ENCODE measurements at regions of chr6 and their contacts with region 1.

Region 1: GRCh38 chr6:41092421-41093140 is 19.8 kb downstream of the NFYA start:
- DNase-seq: no peak
- H3K4me3 ChIP-seq: no peak overlapping the region
- H3K4me3 Mint-ChIP-seq: no peak overlapping the region
- H3K27ac Mint-ChIP-seq: no peak overlapping the region
- H3K4me1 ChIP-seq: no peaks in the 10 kb centered on the region
- H3K4me1 Mint-ChIP-seq: no peaks in the 10 kb centered on the region
- H3K27me3 ChIP-seq: no peaks in the 10 kb centered on the region
- H3K27me3 Mint-ChIP-seq: no peaks in the 10 kb centered on the region
- CTCF ChIP-seq: peak; percentile 32 to 37

Region 2: GRCh38 chr6:41051873-41052272 is 40.7 kb before region 1 on chr6:
- CTCF ChIA-PET with region 1: no interaction called
- POLR2A ChIA-PET with region 1: no interaction called
- intact Hi-C with region 1: no loop called
- DNase-seq: no peak
- H3K4me3 ChIP-seq: no peak overlapping the region
- H3K4me3 Mint-ChIP-seq: peak overlapping the region; percentile 2
- H3K27ac Mint-ChIP-seq: peak overlapping the region; percentile 64
- H3K4me1 ChIP-seq: peaks cover 99% of the 10 kb centered on the region
- H3K4me1 Mint-ChIP-seq: peaks cover 76% of the 10 kb centered on the region
- H3K27me3 ChIP-seq: no peaks in the 10 kb centered on the region
- H3K27me3 Mint-ChIP-seq: no peaks in the 10 kb centered on the region
- CTCF ChIP-seq: no peak

Region 3: DNA sequence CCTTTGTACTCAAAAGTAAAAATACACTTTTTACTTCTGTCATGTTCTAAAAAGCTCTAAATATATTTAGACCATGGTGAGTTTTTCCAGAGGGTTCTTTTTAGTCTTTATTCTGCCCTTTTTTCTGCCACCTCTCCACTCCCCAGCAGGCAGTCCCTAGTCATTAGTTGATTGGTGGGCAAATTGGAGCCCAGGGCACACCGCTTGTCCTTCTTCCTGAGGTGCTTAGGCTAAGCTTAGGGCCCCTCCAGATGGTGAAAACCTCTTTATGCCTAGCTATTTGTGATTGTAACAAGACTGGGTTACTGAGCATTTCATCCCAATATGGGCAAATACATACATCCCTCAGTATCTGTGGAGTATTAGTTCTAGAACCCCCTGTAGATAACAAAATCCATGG is 55.3 kb after region 1 on chr6:
- CTCF ChIA-PET with region 1: no interaction called
- POLR2A ChIA-PET with region 1: no interaction called
- intact Hi-C with region 1: loop called (anchors 2 kb)
- DNase-seq: no peak
- H3K4me3 ChIP-seq: no peak overlapping the region
- H3K4me3 Mint-ChIP-seq: no peak overlapping the region
- H3K27ac Mint-ChIP-seq: no peak overlapping the region
- H3K4me1 ChIP-seq: no peaks in the 10 kb centered on the region
- H3K4me1 Mint-ChIP-seq: no peaks in the 10 kb centered on the region
- H3K27me3 ChIP-seq: no peaks in the 10 kb centered on the region
- H3K27me3 Mint-ChIP-seq: no peaks in the 10 kb centered on the region
- CTCF ChIP-seq: no peak

Region 4: DNA sequence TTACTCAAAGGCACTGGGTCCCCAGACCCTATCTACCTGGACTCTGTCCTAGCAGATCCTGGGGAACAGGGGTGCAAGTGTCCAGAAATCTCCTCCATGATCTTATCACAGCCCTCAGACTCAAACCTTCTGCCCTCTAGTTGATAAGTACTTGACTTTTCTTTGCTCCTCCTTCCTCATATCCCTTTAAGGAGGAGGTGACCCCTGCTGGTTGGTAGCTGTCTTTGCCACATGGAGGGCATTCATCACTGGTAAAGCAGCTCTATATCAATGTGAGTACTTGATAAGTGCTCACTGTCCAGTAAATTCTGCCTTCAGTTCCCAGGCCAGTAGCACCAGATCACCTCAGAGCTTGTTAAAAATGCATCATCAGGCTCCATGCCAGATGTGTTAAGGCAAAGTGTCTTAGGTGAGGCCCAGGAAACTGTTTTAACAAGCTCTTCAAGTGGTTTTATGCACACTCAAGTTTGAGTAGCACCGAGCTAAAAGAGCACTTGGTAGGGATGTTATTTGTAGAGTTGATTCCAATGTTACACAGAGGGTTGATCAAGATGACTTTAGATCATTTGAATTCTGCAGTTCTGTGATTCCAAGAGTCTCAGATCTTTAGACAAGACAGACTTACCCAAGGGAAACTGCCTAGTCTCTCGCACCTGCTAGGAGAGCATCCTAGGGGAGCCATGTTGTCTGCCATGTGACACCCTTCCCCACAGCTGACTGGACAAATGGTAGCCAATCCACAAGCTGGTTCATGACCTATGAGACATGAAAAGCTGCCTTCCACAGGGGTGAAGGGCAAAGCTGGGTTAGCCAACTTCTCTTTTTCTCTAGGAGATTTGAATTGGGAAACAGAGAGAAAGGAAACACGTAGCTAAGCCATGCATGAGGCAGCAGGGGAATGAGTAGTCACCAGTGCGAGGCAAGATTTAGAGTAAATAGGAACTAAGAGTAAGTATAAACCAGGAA is 89.8 kb after region 1 on chr6:
- CTCF ChIA-PET with region 1: interaction called, 15 read pairs
- POLR2A ChIA-PET with region 1: no interaction called
- intact Hi-C with region 1: loop called (anchors 1 kb)
- DNase-seq: peak; percentile 65 to 70
- H3K4me3 ChIP-seq: no peak overlapping the region
- H3K4me3 Mint-ChIP-seq: no peak overlapping the region
- H3K27ac Mint-ChIP-seq: no peak overlapping the region
- H3K4me1 ChIP-seq: no peaks in the 10 kb centered on the region
- H3K4me1 Mint-ChIP-seq: no peaks in the 10 kb centered on the region
- H3K27me3 ChIP-seq: no peaks in the 10 kb centered on the region
- H3K27me3 Mint-ChIP-seq: peaks cover 8% of the 10 kb centered on the region
- CTCF ChIP-seq: peak; percentile 57 to 83

Measured in Caco-2 (cell line).